ENCODE measurements at regions of chr9 and their contacts with region 1.

Region 1: GRCh38 chr9:134024828-134025605 is at the start of gene BRD3OS:
- DNase-seq: peak; percentile 88 to 97
- H3K4me3 ChIP-seq: peak within 1 kb of the TSS; percentile 72
- H3K27ac ChIP-seq: no peak within 1 kb of the TSS
- H3K4me1 ChIP-seq: peaks cover 10% of the 10 kb centered on the region
- H3K27me3 ChIP-seq: no peaks in the 10 kb centered on the region
- CTCF ChIP-seq: no peak
- total RNA-seq, gene BRD3OS: 23.7 and 26.2 TPM in 2 replicates

Region 2: DNA sequence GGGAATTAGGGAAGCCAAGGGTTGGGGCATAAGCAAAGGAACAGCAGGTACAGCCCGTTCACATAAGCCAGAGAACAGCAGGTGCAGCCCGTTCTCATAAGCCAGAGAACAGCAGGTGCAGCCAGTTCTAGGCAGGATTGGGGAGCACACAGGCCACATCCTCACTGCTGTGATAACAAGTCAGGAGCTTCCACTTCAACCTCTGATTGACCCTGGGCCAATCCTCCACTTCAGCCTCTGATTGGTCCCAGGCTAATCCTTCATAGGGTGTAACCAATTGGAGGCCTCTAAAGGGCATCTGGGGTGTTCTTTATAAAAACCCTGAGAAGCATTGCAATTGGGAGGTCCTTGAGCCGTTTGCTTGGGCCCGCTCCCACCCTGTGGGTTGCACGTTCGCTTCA is 935.7 kb before region 1 on chr9:
- CTCF ChIA-PET with region 1: no interaction called
- POLR2A ChIA-PET with region 1: no interaction called
- intact Hi-C with region 1: no loop called
- DNase-seq: no peak
- H3K4me3 ChIP-seq: no peak overlapping the region
- H3K27ac ChIP-seq: no peak overlapping the region
- H3K4me1 ChIP-seq: no peaks in the 10 kb centered on the region
- H3K27me3 ChIP-seq: no peaks in the 10 kb centered on the region
- CTCF ChIP-seq: no peak

Region 3: DNA sequence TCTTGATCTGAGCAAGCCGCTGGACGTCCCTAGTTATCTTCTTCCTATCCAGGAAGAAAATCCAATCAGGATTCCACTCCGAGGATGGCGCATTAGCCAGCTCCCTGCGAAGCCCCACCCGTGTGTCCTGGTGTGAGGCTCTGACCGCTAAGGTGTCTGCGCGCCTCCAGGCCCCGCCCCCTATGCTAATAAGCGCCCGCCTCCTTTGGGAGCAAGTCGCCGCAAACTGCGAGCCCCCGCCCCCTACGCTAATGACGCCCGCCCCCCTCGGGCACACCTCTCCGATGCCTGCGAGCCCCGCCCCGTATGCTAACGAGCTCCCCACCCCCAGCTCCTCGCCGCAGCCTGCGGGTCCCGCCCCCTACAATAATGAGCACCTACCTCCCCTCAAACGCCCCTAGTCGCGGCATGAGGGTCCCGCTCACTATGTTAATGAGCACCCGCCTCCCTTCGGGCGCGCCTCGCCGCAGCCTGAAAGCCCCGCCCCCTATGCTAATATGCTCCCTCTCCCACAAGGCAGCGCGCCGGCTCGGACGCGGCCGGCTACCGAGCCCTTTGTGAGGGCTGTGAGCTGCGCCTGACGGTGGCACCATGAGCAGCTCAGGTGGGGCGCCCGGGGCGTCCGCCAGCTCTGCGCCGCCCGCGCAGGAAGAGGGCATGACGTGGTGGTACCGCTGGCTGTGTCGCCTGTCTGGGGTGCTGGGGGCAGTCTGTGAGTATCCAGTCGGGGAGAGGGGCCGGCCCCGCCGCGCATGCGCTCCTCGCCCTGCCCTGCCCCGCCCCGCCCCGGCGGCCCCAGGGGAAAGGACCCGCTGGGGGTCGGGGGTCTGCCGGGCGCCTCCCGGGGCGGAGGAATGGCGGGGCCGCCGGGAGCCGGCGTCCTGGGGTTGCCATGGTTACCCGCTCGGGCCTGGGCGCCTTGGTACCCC is 565.3 kb before region 1 on chr9 and contains the start of gene CACFD1:
- CTCF ChIA-PET with region 1: no interaction called
- POLR2A ChIA-PET with region 1: interaction called, 28 read pairs
- intact Hi-C with region 1: no loop called
- DNase-seq: peak; percentile 87 to 98
- H3K4me3 ChIP-seq: peak within 1 kb of the TSS; percentile 61
- H3K27ac ChIP-seq: peak within 1 kb of the TSS; percentile 67
- H3K4me1 ChIP-seq: peaks cover 13% of the 10 kb centered on the region
- H3K27me3 ChIP-seq: no peaks in the 10 kb centered on the region
- CTCF ChIP-seq: no peak
- total RNA-seq, gene CACFD1: 28.7 and 32.7 TPM in 2 replicates

Region 4: GRCh38 chr9:133754187-133754586 is 270.8 kb before region 1 on chr9:
- CTCF ChIA-PET with region 1: no interaction called
- POLR2A ChIA-PET with region 1: interaction called, 17 read pairs
- intact Hi-C with region 1: no loop called
- DNase-seq: no peak
- H3K4me3 ChIP-seq: no peak overlapping the region
- H3K27ac ChIP-seq: no peak overlapping the region
- H3K4me1 ChIP-seq: no peaks in the 10 kb centered on the region
- H3K27me3 ChIP-seq: no peaks in the 10 kb centered on the region
- CTCF ChIP-seq: no peak

Region 5: DNA sequence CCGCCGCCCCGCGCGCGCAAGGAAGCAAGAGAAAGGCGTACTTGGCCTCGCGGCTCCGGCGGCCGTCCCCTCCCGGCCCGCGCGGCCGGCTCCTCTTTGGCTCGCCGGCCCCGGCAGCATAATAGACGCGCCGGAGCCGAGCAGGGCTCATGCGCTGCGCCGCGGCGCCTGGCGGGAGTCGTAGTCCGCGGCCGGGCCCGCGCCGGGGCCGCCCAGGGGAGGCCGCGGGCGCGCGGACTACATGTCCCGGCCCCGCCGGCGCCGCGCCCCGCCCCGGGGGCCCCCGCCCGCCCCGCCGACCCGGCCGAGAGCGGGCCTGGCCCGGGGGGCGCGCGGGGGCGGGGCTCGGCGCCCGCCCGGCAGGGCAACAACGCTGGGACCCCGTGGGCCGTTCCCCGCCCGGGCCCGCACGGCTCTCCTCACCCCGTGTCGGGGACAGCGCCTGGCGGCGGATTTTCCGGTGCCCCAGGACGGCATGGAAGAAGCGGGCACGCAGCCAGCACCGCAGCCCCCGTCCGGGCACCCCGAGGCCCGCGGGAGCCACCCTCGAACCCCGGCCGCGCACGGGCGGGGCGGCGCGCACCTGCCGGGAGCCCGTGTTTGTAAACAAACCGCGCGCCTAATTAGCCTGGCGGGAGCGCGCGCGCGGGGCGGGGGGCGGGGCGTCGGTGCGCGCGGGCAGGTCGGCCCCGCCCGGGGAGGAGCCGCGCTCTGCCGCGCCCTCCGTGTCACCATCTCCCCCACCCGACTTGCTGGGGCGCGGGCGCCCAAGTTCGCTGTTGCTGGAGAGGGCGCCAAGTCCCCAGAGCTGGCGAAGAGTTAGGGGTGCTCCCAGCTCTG is 43.1 kb after region 1 on chr9 and contains the start of gene BRD3:
- CTCF ChIA-PET with region 1: interaction called, 3 read pairs
- POLR2A ChIA-PET with region 1: no interaction called
- intact Hi-C with region 1: loop called (anchors 1 kb)
- DNase-seq: peak; percentile 57 to 90
- H3K4me3 ChIP-seq: peak within 1 kb of the TSS; percentile 68
- H3K27ac ChIP-seq: no peak within 1 kb of the TSS
- H3K4me1 ChIP-seq: peaks cover 13% of the 10 kb centered on the region
- H3K27me3 ChIP-seq: peaks cover 42% of the 10 kb centered on the region
- CTCF ChIP-seq: no peak
- total RNA-seq, gene BRD3: 47.3 and 64.0 TPM in 2 replicates

Region 6: GRCh38 chr9:134163353-134164196 is 138.6 kb after region 1 on chr9:
- CTCF ChIA-PET with region 1: no interaction called
- POLR2A ChIA-PET with region 1: no interaction called
- intact Hi-C with region 1: loop called (anchors 2 kb)
- DNase-seq: peak; percentile 50 to 67
- H3K4me3 ChIP-seq: no peak overlapping the region
- H3K27ac ChIP-seq: no peak overlapping the region
- H3K4me1 ChIP-seq: peaks cover 6% of the 10 kb centered on the region
- H3K27me3 ChIP-seq: no peaks in the 10 kb centered on the region
- CTCF ChIP-seq: peak; percentile 34; the same call in 1 of the 2 replicates

Region 7: GRCh38 chr9:134751622-134752021 is 726.6 kb after region 1 on chr9:
- CTCF ChIA-PET with region 1: no interaction called
- POLR2A ChIA-PET with region 1: no interaction called
- intact Hi-C with region 1: no loop called
- DNase-seq: no peak
- H3K4me3 ChIP-seq: no peak overlapping the region
- H3K27ac ChIP-seq: no peak overlapping the region
- H3K4me1 ChIP-seq: no peaks in the 10 kb centered on the region
- H3K27me3 ChIP-seq: peaks cover 50% of the 10 kb centered on the region
- CTCF ChIP-seq: no peak

Region 8: DNA sequence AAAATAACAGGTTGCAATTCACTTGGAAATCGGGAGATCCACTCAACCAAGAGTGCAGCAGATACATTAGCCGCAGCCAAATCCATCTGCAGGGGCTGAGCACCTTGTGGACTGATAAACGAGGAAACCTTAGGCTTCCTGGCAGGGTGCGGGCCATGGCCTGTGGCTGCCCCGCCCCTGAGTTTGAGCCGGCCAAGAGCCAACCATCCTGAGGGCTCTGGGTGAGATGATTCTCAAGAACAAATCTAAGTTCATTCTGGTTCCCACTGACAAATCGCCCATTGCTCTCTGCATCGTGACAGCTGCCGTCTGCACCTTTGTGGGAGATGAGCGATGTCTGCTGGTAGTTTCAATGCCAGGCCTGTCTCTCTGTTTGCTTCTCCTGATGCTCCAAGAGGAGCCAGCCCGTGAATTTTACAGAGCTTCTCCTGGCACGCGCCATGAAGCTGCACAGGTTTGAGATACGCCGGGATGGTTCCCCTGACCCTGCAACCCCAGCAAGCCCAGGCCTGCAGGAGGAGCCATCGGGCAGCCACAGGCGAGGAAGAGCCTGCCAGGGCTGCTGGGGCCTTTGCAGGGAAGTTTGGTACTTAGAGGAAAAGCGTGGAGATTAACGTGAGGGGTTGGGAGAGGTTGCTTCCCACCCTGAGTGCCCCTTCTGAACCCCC is 1216.5 kb after region 1 on chr9:
- CTCF ChIA-PET with region 1: interaction called, 11 read pairs
- POLR2A ChIA-PET with region 1: no interaction called
- intact Hi-C with region 1: no loop called
- DNase-seq: no peak
- H3K4me3 ChIP-seq: no peak overlapping the region
- H3K27ac ChIP-seq: no peak overlapping the region
- H3K4me1 ChIP-seq: no peaks in the 10 kb centered on the region
- H3K27me3 ChIP-seq: peaks cover 98% of the 10 kb centered on the region
- CTCF ChIP-seq: no peak

Measured in PC-9 (cell line).